Dendritic cell treated with granulocyte-macrophage colony-stimulating factor and Interleukin-4, amounts not matched to agents 40 ng/mL and 50 ng/mL, for 4 days (primary cell): ENCODE measurements at regions of chr14 and their contacts with region 1.

Region 1: GRCh38 chr14:54805521-54806322 is 96.9 kb downstream of the GCH1 start:
- H3K4me3 Mint-ChIP-seq: no peak overlapping the region
- H3K27ac Mint-ChIP-seq: peak overlapping the region; percentile 68
- H3K4me1 Mint-ChIP-seq: peaks cover 9% of the 10 kb centered on the region
- H3K27me3 Mint-ChIP-seq: peaks cover 22% of the 10 kb centered on the region

Region 2: DNA sequence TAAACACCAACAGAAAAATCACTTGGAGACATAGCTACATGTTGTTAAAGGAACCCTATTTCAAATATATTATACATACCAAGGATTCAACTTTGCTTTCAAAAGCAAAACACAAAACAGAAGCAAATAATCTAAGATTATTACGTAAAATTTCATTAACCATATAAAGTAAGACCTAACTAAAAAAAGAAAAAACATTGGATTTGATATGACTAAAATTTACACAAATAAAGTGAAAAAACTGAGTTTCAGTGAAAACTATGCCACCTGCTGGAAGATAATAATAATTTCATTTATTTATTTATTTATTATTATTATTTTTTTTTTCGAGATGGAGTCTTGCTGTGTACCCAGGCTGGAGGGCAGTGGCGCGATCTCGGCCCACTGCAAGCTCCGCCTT is 176.0 kb after region 1 on chr14:
- intact Hi-C with region 1: loop called (anchors 10 kb)
- H3K4me3 Mint-ChIP-seq: no peak overlapping the region
- H3K27ac Mint-ChIP-seq: no peak overlapping the region
- H3K4me1 Mint-ChIP-seq: no peaks in the 10 kb centered on the region
- H3K27me3 Mint-ChIP-seq: no peaks in the 10 kb centered on the region

Region 3: GRCh38 chr14:55645145-55645544 is 839.4 kb after region 1 on chr14:
- intact Hi-C with region 1: no loop called
- H3K4me3 Mint-ChIP-seq: no peak overlapping the region
- H3K27ac Mint-ChIP-seq: no peak overlapping the region
- H3K4me1 Mint-ChIP-seq: peaks cover 9% of the 10 kb centered on the region
- H3K27me3 Mint-ChIP-seq: no peaks in the 10 kb centered on the region